H1 (cell line): ENCODE measurements at regions of chr16 and their contacts with region 1.

Region 1: DNA sequence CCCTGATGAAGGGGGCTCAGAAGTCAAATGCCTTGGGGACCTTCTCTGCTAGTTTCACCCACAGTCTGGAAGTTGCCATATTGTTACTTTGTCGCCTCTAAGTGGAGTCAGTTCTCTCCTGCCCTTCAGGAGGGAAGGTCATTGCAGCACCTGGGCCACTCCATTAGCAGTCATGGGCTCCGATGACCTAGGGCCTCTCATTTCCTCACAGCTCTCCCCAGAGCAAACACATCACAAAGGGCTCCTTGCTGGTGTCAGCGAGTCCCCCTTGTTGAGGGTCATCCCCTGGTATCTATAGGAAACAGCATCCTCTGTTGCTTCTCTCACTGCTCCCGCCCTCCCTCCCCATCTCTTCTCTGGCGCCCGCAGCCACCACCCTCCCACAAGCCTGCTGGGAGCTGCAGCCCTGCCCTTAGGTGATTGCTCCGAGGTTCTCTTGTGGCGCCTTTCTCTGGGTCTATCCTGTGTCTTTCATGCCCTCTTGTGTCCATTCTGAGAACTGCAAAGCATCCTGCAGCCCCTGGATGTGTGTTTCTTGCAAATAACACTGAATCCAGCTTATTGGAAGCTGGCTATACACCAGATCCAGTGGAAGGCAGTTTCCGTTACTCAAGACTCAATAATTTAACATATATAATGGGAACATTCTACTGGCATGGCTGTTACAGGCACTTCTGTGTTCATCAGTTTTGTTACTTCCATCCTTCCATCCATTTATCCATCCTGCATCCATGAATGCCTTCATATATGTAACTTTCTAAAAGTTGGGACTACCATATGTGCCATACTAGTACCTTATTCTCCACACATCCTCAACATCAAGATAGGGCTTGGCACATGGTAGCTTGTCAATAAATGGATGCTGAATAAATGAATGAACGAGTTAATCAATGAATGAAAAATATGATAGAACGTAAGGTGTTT is 21.2 kb downstream of the PDILT start:
- DNase-seq: peak; percentile 67 to 82
- H3K4me3 ChIP-seq: no peak overlapping the region
- H3K27ac ChIP-seq: no peak overlapping the region
- H3K4me1 ChIP-seq: peaks cover 0 to 5% (median 2%) of the 10 kb centered on the region in 4 experiments; a peak in 4 of 7 replicates
- H3K27me3 ChIP-seq: no peaks in the 10 kb centered on the region
- CTCF ChIP-seq: peak; percentile 50 to 94 (median 88)
- EP300 ChIP-seq: no peak
- POLR2A ChIP-seq: no peak
- RAD21 ChIP-seq: peak; percentile 92 to 97

Region 2: GRCh38 chr16:20073203-20074098 is 309.9 kb before region 1 on chr16 and contains the start of gene GPR139:
- CTCF ChIA-PET with region 1: interaction called, 10 read pairs
- POLR2A ChIA-PET with region 1: no interaction called
- DNase-seq: peak in 1 of 2 experiments; percentile 83
- H3K4me3 ChIP-seq: peak within 1 kb of the TSS; percentile 54 to 67 (median 59)
- H3K27ac ChIP-seq: no peak within 1 kb of the TSS
- H3K4me1 ChIP-seq: peaks cover 7 to 23% (median 15%) of the 10 kb centered on the region in 4 experiments
- H3K27me3 ChIP-seq: peaks cover 3 to 37% (median 34%) of the 10 kb centered on the region in 4 experiments
- CTCF ChIP-seq: no peak
- EP300 ChIP-seq: no peak
- POLR2A ChIP-seq: no peak
- RAD21 ChIP-seq: no peak; a peak in 1 of 4 replicates
- total RNA-seq, gene GPR139: 0.73 and 0.84 TPM in 2 replicates

Region 3: GRCh38 chr16:20310421-20311395 is 72.7 kb before region 1 on chr16:
- CTCF ChIA-PET with region 1: interaction called, 10 read pairs
- POLR2A ChIA-PET with region 1: no interaction called
- DNase-seq: no peak
- H3K4me3 ChIP-seq: no peak overlapping the region
- H3K27ac ChIP-seq: no peak overlapping the region
- H3K4me1 ChIP-seq: no peaks in the 10 kb centered on the region
- H3K27me3 ChIP-seq: no peaks in the 10 kb centered on the region
- CTCF ChIP-seq: no peak
- EP300 ChIP-seq: no peak
- POLR2A ChIP-seq: no peak
- RAD21 ChIP-seq: no peak

Region 4: GRCh38 chr16:20359997-20360396 is 23.4 kb before region 1 on chr16:
- CTCF ChIA-PET with region 1: interaction called, 114 read pairs
- POLR2A ChIA-PET with region 1: interaction called, 3 read pairs
- DNase-seq: peak in 1 of 2 experiments; percentile 59
- H3K4me3 ChIP-seq: no peak overlapping the region
- H3K27ac ChIP-seq: no peak overlapping the region
- H3K4me1 ChIP-seq: no peaks in the 10 kb centered on the region
- H3K27me3 ChIP-seq: no peaks in the 10 kb centered on the region
- CTCF ChIP-seq: peak; percentile 57 to 71 (median 66)
- EP300 ChIP-seq: no peak
- POLR2A ChIP-seq: no peak
- RAD21 ChIP-seq: peak; percentile 53 to 64

Region 5: DNA sequence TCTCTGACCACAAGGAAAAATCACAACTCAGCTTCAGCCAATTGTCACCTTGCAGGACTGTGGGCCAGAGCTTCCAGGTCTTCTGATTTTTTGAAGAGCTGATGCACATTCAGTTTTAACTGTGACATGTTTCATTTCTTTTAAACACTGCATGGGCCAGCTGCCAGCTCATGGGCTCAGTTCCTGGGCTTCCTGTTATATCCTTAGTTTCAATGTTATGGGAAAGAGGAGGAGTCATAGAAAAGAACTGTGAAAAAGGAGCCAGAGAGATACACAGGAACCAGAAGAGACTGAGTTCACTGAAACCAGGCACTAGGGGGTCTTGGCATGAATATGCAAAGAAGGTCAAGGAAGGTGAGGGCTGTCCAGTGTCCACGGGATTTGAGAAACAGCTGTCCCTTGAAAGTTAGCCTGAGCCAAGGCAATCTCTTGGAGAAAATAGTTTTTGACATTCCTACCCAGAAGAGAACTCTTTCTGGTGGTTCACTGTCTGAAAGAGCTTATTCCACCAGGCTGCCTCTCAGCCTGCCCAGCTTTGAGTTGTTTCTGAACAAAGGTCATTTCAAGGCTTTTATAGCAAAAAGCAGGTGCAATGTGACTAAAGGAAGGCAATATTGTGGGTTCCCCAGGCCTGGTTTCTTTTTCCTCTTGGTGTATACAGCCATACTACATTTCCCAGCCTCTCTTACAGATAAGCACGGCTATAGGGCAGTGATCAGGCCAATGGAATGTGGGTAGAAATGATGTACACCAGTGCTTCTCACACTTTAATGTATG is 10.6 kb after region 1 on chr16:
- CTCF ChIA-PET with region 1: interaction called, 41 read pairs
- POLR2A ChIA-PET with region 1: no interaction called
- DNase-seq: no peak
- H3K4me3 ChIP-seq: no peak overlapping the region
- H3K27ac ChIP-seq: no peak overlapping the region
- H3K4me1 ChIP-seq: no peaks in the 10 kb centered on the region
- H3K27me3 ChIP-seq: no peaks in the 10 kb centered on the region
- CTCF ChIP-seq: no peak
- EP300 ChIP-seq: no peak
- POLR2A ChIP-seq: no peak
- RAD21 ChIP-seq: no peak